Sigmoid colon (tissue), 7 donors: ENCODE measurements at regions of chr1 and their contacts with region 1.

Region 1: GRCh38 chr1:181166377-181167196 is 78.1 kb downstream of the IER5 start:
- DNase-seq: peak; percentile 79
- H3K4me3 ChIP-seq: no peak overlapping the region
- H3K27ac ChIP-seq: no peak overlapping the region
- H3K4me1 ChIP-seq: peaks cover 0 to 6% (median 4%) of the 10 kb centered on the region in 4 donors
- H3K27me3 ChIP-seq: no peaks in the 10 kb centered on the region
- CTCF ChIP-seq: peak; percentile 63 to 84 (median 74)
- EP300 ChIP-seq: no peak
- POLR2A ChIP-seq: no peak

Region 2: GRCh38 chr1:180515864-180516388 is 650.7 kb before region 1 on chr1:
- intact Hi-C with region 1: loop called (anchors 5 kb)
- DNase-seq: peak; percentile 86
- H3K4me3 ChIP-seq: no peak overlapping the region
- H3K27ac ChIP-seq: no peak overlapping the region
- H3K4me1 ChIP-seq: peaks cover 0 to 9% (median 0%) of the 10 kb centered on the region in 4 donors
- H3K27me3 ChIP-seq: no peaks in the 10 kb centered on the region
- CTCF ChIP-seq: peak; percentile 46 to 79 (median 72)
- EP300 ChIP-seq: no peak
- POLR2A ChIP-seq: no peak

Region 3: DNA sequence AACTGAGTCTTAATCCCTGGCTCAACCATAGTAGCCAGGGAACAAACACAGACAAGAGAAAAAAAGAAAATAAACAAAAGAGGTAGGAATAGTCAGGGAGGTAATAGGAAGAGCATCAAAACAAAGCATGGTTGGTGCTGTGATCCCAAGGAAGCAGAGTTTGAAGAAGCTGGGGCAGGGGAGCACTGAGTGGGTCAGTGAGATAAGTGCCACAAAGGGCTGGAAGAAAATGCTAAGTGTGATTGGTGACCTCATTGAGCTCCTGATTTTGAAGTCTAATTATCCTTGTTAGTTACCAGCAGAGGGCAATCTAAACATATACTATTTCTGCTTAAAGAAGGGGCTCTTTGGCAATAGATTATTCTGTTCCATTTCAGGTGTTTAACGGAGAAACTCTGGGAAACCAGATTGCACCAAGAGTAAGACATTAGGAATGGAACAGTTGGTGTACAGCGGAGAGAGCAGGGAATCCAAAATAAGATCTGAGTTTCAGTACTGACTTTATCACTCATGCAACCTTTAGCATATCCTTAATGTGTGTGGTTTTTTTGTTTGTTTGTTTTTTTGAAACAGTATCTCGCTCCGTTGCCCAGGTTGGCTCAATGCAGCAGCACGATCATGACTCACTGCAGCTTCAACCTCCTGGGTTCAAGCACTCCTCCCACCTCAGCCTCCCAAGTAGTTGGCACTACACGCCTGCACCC is 284.6 kb before region 1 on chr1:
- intact Hi-C with region 1: loop called (anchors 5 kb)
- DNase-seq: no peak
- H3K4me3 ChIP-seq: no peak overlapping the region
- H3K27ac ChIP-seq: no peak overlapping the region
- H3K4me1 ChIP-seq: no peaks in the 10 kb centered on the region
- H3K27me3 ChIP-seq: no peaks in the 10 kb centered on the region
- CTCF ChIP-seq: peak; percentile 21 to 46 (median 36)
- EP300 ChIP-seq: no peak
- POLR2A ChIP-seq: no peak

Region 4: GRCh38 chr1:181135815-181136750 is 30.5 kb before region 1 on chr1:
- intact Hi-C with region 1: no loop called
- DNase-seq: no peak
- H3K4me3 ChIP-seq: no peak overlapping the region
- H3K27ac ChIP-seq: peak overlapping the region; percentile 20 to 63 (median 22)
- H3K4me1 ChIP-seq: peaks cover 0 to 19% (median 16%) of the 10 kb centered on the region in 4 donors
- H3K27me3 ChIP-seq: no peaks in the 10 kb centered on the region
- CTCF ChIP-seq: no peak
- EP300 ChIP-seq: no peak
- POLR2A ChIP-seq: no peak